Posterior vena cava (tissue), 2 donors: ENCODE measurements at regions of chr9 and their contacts with region 1.

Region 1: GRCh38 chr9:115142517-115143270 is 24.7 kb upstream of the TNC start:
- DNase-seq: no peak

Region 2: GRCh38 chr9:115313545-115313944 is 170.9 kb after region 1 on chr9:
- intact Hi-C with region 1: loop called in 1 of 2 experiments (anchors 5 kb)
- DNase-seq: no peak

Region 3: GRCh38 chr9:116112236-116112635 is 969.5 kb after region 1 on chr9:
- intact Hi-C with region 1: no loop called
- DNase-seq: no peak